ENCODE measurements at regions of chr15 and their contacts with region 1.

Region 1: DNA sequence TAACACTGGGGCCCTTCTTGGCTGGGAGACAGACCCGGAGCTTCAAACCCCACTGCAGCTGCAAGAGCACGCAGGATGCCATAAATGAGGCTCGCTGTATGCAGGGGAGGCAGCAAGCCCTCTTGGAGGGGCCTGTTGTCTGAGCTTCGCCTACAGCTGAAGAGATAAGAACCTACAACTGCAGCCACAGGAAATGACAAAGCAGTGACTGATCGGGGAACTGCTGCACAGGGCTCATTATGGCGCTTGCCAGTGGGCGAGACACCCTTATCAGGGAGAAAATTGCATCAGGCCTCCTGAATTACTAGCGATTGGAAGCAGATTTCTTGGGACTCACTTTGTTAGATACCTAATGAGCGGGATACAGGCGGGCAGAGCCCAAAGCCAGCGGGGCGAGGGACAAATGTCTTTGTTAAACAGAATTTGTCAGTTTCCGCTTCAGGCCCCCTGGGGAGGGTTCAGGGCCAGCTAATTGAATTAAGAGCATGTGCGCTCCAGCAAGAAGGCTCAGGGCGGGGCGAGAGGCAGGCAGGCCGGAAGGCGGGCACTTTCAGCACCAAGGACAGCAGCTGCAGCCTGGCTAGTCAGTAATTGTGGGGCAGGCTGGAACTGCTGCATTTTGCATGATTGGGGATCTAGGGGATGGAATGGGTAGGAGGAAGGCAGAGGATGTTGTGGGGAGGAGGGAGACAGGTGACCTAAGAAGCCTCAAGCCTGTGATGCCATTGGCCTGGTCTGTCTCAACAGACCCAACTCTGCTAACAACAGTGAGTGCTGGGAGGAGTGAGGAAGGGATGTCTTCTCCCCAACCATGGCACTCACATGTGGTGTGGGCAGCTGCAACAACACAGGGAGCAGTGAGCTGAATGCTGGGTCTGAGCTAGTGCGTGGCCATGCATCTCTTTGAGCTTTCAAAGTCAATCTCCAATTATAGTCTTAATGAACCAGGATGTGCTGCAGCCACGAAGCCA is 55.3 kb downstream of the CCDC33 start:
- DNase-seq: peak; percentile 50
- H3K4me3 ChIP-seq: no peak overlapping the region
- H3K27ac ChIP-seq: no peak overlapping the region
- H3K4me1 ChIP-seq: no peaks in the 10 kb centered on the region
- H3K27me3 ChIP-seq: no peaks in the 10 kb centered on the region
- CTCF ChIP-seq: no peak

Region 2: GRCh38 chr15:74240002-74240568 is 51.3 kb before region 1 on chr15:
- CTCF ChIA-PET with region 1: no interaction called
- dilution Hi-C with region 1: no loop called
- in situ Hi-C with region 1: no loop called
- intact Hi-C with region 1: loop called (anchors 2 kb)
- DNase-seq: peak; percentile 91
- H3K4me3 ChIP-seq: no peak overlapping the region
- H3K27ac ChIP-seq: no peak overlapping the region
- H3K4me1 ChIP-seq: peaks cover 30% of the 10 kb centered on the region
- H3K27me3 ChIP-seq: no peaks in the 10 kb centered on the region
- CTCF ChIP-seq: peak; percentile 51 to 63

Region 3: DNA sequence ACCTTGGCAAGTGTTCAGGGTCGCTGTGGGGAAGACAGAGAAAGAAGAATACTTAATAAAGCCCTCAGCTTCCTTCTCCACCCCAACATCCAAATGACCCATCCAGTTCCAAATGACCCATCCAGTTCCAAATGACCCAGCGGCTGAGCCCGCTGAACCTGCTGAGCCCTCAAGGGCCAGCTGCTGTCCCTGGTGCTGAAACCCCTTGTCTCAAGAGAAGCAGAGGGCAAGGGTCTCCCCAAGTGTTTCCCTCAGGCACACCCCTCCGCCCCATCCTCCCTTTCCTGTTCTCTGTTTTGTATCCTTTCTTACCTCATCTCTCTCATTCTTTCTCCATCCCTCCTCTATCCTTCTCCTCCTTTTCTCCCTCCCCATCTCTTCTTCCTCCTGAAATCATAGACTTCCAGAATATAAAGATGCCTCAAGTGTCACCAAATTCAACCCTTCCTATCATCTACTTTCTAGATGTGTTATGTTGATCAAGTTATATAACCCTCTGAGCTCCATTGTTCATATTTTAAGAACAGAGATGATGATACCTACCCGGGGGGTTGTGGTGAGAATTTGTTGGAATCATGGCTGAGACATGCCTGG is 26.2 kb before region 1 on chr15:
- CTCF ChIA-PET with region 1: no interaction called
- dilution Hi-C with region 1: no loop called
- in situ Hi-C with region 1: no loop called
- intact Hi-C with region 1: loop called (anchors 2 kb)
- DNase-seq: no peak
- H3K4me3 ChIP-seq: no peak overlapping the region
- H3K27ac ChIP-seq: no peak overlapping the region
- H3K4me1 ChIP-seq: no peaks in the 10 kb centered on the region
- H3K27me3 ChIP-seq: no peaks in the 10 kb centered on the region
- CTCF ChIP-seq: no peak

Region 4: DNA sequence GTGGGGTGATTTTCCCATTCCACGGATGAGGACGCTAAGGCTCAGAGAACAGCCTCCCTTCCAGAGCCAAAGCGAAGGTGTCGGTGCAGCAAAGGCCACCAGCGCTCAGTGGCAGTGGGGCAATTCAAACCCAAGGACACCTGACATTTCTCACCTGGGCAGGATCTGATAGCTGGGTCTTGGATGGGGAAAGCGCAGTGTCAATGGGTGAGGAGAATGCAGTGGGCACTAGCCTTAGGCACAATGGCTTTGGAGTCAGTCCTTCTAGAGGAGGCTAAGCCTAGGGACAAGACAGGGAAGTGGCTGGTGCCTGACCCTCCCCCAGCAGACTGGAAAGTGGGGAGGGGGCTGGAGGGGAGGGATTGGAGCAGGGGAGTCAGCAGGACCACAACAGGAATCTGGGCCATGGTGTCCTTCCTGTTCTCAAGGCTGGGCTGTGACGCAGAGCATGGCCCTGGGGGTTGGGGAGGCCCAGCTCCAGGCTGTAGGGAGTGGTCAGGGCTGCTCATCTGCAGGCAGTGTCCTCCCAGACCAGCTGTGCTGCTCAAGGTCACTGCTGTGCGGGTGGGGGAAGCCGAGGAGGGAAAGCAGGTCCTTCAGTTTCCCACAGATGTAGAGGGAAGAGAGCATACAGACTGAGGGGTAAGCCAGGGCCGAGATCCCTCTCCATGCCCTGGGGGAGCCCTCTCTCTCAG is 35.2 kb after region 1 on chr15:
- CTCF ChIA-PET with region 1: no interaction called
- dilution Hi-C with region 1: no loop called
- in situ Hi-C with region 1: no loop called
- intact Hi-C with region 1: no loop called
- DNase-seq: no peak
- H3K4me3 ChIP-seq: no peak overlapping the region
- H3K27ac ChIP-seq: no peak overlapping the region
- H3K4me1 ChIP-seq: no peaks in the 10 kb centered on the region
- H3K27me3 ChIP-seq: no peaks in the 10 kb centered on the region
- CTCF ChIP-seq: no peak

Region 5: DNA sequence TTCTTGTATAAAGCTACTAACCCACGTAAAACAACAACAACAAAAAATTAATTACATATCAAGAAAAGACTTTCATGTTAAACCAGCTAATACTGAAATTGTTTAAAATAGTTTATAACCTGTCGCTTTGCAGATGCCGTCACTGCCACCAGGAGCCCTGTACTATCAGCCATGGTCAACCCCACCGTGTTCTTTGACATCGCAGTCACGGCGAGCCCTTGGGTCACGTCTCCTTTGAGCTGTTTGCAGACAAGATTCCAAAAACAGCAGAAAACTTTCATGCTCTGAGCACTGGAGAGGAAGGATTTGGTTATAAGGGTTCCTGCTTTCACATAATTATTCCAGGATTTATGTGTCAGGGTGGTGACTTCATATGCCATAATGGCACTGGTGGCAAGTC is 70.0 kb after region 1 on chr15:
- CTCF ChIA-PET with region 1: no interaction called
- dilution Hi-C with region 1: no loop called
- in situ Hi-C with region 1: no loop called
- intact Hi-C with region 1: no loop called
- DNase-seq: no peak
- H3K4me3 ChIP-seq: no peak overlapping the region
- H3K27ac ChIP-seq: no peak overlapping the region
- H3K4me1 ChIP-seq: peaks cover 8% of the 10 kb centered on the region
- H3K27me3 ChIP-seq: peaks cover 4% of the 10 kb centered on the region
- CTCF ChIP-seq: no peak

Region 6: DNA sequence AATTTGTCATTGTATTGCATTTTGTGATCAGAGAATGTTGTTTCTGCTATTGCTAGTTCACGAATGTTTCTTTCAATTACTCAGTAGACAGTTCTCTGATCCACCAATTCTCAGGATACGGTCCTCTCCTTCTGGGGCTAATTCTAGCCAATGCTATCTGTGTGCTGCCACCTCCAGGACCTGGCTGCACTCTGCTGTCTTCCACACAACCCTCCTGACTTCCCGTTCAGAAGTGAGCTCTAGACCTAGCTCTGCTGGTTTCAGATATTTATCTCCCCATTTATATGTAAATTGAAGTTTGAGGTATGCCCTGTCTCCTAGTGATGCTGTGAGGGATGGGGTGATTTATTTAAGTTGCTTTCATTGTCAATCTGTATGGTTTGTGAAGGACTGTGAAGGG is 191.3 kb after region 1 on chr15:
- CTCF ChIA-PET with region 1: no interaction called
- dilution Hi-C with region 1: no loop called
- in situ Hi-C with region 1: no loop called
- intact Hi-C with region 1: no loop called
- DNase-seq: no peak
- H3K4me3 ChIP-seq: no peak overlapping the region
- H3K27ac ChIP-seq: no peak overlapping the region
- H3K4me1 ChIP-seq: no peaks in the 10 kb centered on the region
- H3K27me3 ChIP-seq: no peaks in the 10 kb centered on the region
- CTCF ChIP-seq: no peak

Measured in mammary epithelial cell (primary cell).